ENCODE measurements at regions of chr9 and their contacts with region 1.

Region 1: GRCh38 chr9:1837449-1838084 is 177.6 kb upstream of the SMARCA2 start:
- DNase-seq: peak; percentile 61
- ATAC-seq: peak; percentile 95
- H3K4me3 ChIP-seq: no peak overlapping the region
- H3K27ac ChIP-seq: no peak overlapping the region
- H3K4me1 ChIP-seq: no peaks in the 10 kb centered on the region
- H3K27me3 ChIP-seq: no peaks in the 10 kb centered on the region
- CTCF ChIP-seq: peak; percentile 68
- EP300 ChIP-seq: no peak
- POLR2A ChIP-seq: no peak
- RAD21 ChIP-seq: no peak

Region 2: GRCh38 chr9:1460143-1460769 is 377.3 kb before region 1 on chr9:
- CTCF ChIA-PET with region 1: interaction called, 9 read pairs
- POLR2A ChIA-PET with region 1: no interaction called
- in situ Hi-C with region 1: loop called (anchors 25 kb)
- intact Hi-C with region 1: loop called (anchors 1 kb)
- DNase-seq: peak; percentile 53
- ATAC-seq: peak; percentile 97
- H3K4me3 ChIP-seq: no peak overlapping the region
- H3K27ac ChIP-seq: no peak overlapping the region
- H3K4me1 ChIP-seq: peaks cover 6% of the 10 kb centered on the region; the same call in 1 of the 2 replicates
- H3K27me3 ChIP-seq: no peaks in the 10 kb centered on the region
- CTCF ChIP-seq: peak; percentile 87
- EP300 ChIP-seq: no peak
- POLR2A ChIP-seq: no peak
- RAD21 ChIP-seq: peak; percentile 53; the same call in 1 of the 2 replicates

Region 3: DNA sequence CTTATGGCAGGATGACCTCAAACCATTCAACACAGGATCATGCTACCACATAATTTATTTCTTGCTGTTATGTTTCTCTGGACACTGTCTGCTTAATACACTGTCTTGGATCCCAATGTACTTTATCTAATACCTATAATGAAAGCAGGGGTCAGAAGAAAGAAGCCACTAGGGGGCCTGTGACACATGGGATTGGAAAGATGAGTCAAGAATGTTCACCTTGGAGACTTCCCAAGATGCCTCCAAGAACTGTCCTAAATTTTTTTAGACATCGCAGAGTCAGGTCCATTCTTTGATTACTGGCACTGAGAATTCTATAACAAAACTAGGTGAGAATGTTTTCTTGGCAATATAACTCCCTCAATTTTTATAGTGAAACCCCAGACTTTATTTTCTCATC is 128.2 kb before region 1 on chr9:
- CTCF ChIA-PET with region 1: no interaction called
- POLR2A ChIA-PET with region 1: no interaction called
- in situ Hi-C with region 1: no loop called
- intact Hi-C with region 1: loop called (anchors 1 kb)
- DNase-seq: peak; percentile 8
- ATAC-seq: no peak
- H3K4me3 ChIP-seq: no peak overlapping the region
- H3K27ac ChIP-seq: no peak overlapping the region
- H3K4me1 ChIP-seq: no peaks in the 10 kb centered on the region
- H3K27me3 ChIP-seq: no peaks in the 10 kb centered on the region
- CTCF ChIP-seq: no peak
- EP300 ChIP-seq: no peak
- POLR2A ChIP-seq: no peak
- RAD21 ChIP-seq: no peak

Region 4: GRCh38 chr9:1726993-1727759 is 110.4 kb before region 1 on chr9:
- CTCF ChIA-PET with region 1: no interaction called
- POLR2A ChIA-PET with region 1: no interaction called
- in situ Hi-C with region 1: no loop called
- intact Hi-C with region 1: loop called (anchors 5 kb)
- DNase-seq: no peak
- ATAC-seq: peak; percentile 76
- H3K4me3 ChIP-seq: no peak overlapping the region
- H3K27ac ChIP-seq: no peak overlapping the region
- H3K4me1 ChIP-seq: no peaks in the 10 kb centered on the region
- H3K27me3 ChIP-seq: no peaks in the 10 kb centered on the region
- CTCF ChIP-seq: peak; percentile 23; the same call in 1 of the 2 replicates
- EP300 ChIP-seq: no peak
- POLR2A ChIP-seq: no peak
- RAD21 ChIP-seq: no peak